Activated CD4-positive, alpha-beta T cell treated with anti-CD3 and anti-CD28 coated beads for 36 hours (primary cell): ENCODE measurements at regions of chr14 and their contacts with region 1.

Region 1: DNA sequence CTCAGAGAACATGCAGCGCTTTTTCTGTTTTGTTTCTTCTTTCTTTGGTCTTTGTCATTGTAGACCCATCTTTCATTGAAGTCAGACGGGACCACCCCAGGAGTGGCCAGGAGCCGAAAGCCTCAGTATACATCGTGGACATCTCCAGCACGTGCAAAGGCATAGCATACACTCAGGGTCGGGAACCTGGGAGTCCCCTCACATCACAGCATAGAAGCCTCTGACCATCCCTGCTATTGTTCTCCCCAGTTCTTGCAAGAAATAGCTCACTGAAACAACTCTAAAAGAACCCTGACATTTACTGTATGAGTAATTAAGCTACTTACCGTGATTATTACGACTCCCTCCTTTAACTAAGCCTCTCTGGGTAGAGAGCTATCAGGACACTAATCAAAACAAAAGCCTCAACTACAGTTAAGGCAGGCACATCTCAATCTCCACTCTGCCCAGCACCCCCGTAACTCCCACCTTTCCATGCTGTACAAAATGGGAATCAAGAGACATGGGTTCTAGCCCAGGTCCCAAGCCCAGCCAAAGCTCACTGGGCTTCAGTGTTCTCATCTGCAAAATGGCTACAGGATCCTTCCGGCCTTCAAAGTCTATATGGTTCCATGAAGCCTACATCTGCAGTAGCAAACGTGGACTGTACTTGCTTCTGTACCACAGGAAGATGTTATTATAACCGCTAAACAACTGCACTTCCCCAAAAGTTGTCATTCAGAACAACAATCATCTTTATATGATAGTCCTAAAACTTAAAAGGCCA is 6.7 kb downstream of the CCDC88C start:
- DNase-seq: peak; percentile 44
- ATAC-seq: peak; percentile 60
- H3K4me3 Mint-ChIP-seq: peak overlapping the region; percentile 57
- H3K27ac Mint-ChIP-seq: peak overlapping the region; percentile 86
- H3K4me1 Mint-ChIP-seq: peaks cover 90% of the 10 kb centered on the region
- H3K27me3 Mint-ChIP-seq: no peaks in the 10 kb centered on the region

Region 2: GRCh38 chr14:90159146-90159545 is 1251.8 kb before region 1 on chr14:
- CTCF ChIA-PET with region 1: no interaction called
- POLR2A ChIA-PET with region 1: no interaction called
- intact Hi-C with region 1: no loop called
- DNase-seq: no peak
- ATAC-seq: no peak
- H3K4me3 Mint-ChIP-seq: no peak overlapping the region
- H3K27ac Mint-ChIP-seq: no peak overlapping the region
- H3K4me1 Mint-ChIP-seq: no peaks in the 10 kb centered on the region
- H3K27me3 Mint-ChIP-seq: peaks cover 21% of the 10 kb centered on the region

Region 3: DNA sequence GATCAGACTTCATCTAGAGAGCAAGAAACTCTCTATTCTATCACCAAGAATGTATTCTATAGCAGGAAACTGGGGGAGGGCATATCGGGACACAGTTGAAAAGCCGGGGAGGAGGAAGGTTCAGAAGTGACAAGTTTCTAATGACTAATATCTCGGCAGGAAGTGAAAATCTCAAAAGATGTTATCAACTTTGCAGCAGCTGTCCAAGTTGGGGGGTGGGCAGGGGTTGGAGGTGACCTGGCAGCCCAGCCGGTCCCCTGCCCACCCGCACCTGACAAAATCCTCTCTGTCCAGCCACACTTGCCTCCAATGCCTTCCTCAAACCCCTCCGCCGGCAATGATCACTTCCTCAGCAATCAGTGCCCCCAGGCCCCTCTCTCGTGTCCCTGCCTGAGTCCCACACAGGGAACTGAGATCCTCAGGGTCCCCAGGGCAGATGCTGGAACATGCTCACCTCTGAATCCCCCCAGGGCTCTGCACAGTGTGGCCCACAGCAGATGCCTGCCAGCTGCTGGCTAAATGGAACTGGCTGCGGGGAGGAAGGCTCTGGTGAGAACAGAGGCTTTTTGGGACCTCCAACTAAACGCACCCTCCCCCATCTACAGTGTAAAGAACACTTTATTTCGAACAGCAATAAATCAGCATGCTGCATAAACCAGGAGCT is 37.2 kb before region 1 on chr14:
- CTCF ChIA-PET with region 1: interaction called, 4 read pairs
- POLR2A ChIA-PET with region 1: interaction called, 4 read pairs
- intact Hi-C with region 1: loop called (anchors 1 kb)
- DNase-seq: peak; percentile 81
- ATAC-seq: peak; percentile 71
- H3K4me3 Mint-ChIP-seq: peak overlapping the region; percentile 50
- H3K27ac Mint-ChIP-seq: peak overlapping the region; percentile 86
- H3K4me1 Mint-ChIP-seq: peaks cover 99% of the 10 kb centered on the region
- H3K27me3 Mint-ChIP-seq: no peaks in the 10 kb centered on the region

Region 4: DNA sequence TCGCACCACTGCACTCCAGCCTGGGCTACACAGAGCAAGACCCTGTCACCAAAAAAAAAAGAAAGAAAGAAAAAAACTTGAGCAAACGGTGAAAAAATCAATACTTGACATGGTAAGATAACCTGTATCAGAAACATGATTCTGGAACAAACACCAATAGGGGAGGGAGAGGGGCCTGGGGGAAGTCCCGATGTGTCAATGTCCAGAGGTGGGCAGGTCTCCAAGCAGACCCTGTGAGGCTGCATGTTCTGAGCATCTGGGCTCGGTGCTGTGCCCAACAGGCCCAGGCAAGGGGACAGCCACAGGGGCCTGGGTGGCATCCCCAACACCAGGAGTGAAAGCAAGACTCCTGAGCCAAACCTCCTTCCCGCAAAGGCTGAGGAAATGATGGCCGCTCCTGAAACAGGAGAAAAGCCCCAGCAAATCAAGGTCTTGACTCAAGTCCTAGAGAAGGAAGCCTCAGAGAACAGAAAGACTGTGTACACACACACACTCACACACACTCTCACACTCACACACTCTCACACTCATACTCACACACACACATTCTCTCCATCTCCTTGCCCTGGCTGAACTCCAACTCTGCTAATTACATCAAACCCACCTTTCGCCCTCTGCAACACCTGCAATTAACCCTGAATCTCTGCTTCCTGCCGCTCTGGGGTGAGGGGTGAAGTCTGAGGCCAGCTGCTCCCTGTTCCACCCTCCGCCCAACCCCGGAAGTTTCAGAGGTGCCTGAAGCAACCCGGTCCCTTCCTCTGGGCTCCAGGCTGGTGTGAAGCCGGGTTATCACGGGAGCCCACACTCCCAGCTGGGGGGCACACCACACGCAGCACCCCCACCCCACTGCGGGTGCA is 13.8 kb before region 1 on chr14:
- CTCF ChIA-PET with region 1: interaction called, 10 read pairs
- POLR2A ChIA-PET with region 1: interaction called, 8 read pairs
- intact Hi-C with region 1: loop called in 1 of 2 experiments (anchors 2 kb)
- DNase-seq: peak; percentile 83
- ATAC-seq: peak; percentile 85
- H3K4me3 Mint-ChIP-seq: peak overlapping the region; percentile 71
- H3K27ac Mint-ChIP-seq: peak overlapping the region; percentile 94
- H3K4me1 Mint-ChIP-seq: peaks cover 94% of the 10 kb centered on the region
- H3K27me3 Mint-ChIP-seq: no peaks in the 10 kb centered on the region